Right cardiac atrium (tissue), 5 donors: ENCODE measurements at regions of chr12 and their contacts with region 1.

Region 1: DNA sequence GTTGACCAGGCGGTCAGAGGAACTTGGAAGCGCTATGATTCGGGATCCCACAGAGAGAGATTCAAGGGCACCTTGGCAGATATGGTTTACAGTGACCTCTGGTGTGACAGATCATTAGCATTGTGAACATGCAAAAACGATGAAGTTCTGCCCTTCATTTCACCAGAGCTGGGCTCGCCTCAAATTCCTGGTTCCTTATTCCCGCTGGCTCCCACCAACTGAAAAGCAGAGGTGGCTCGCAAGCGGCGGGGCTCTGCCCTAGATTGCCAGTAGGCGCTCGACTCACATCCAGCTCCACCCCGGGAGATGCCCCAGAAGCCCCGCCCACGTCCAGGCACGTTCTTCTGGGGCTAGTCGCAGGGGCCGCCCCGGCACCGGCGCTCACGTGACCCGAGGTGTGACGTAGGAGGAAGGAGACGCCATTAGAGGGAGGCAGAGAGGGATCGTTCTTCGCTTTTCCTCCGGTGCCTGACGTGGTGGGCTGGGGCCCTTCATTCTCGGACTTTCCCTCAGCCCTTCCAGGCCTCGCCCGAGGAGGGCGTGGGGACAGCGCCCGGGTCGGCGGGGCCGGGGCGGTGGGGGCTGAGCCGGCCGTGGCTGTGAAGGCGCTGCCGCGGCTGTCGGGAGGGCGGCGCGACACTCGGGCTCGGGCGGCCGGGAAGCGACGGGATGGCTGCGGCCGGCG is at the start of gene RAB21:
- DNase-seq: peak; percentile 99 to 100 (median 99)
- ATAC-seq: peak; percentile 98 to 99
- H3K4me3 ChIP-seq: peak within 1 kb of the TSS; percentile 92
- H3K27ac ChIP-seq: peak within 1 kb of the TSS; percentile 98
- H3K4me1 ChIP-seq: no peaks in the 10 kb centered on the region
- H3K27me3 ChIP-seq: no peaks in the 10 kb centered on the region
- total RNA-seq, gene RAB21: 124 to 152 (median 133) TPM

Region 2: GRCh38 chr12:71303199-71303598 is 451.4 kb before region 1 on chr12:
- intact Hi-C with region 1: no loop called
- DNase-seq: no peak
- ATAC-seq: no peak
- H3K4me3 ChIP-seq: no peak overlapping the region
- H3K27ac ChIP-seq: no peak overlapping the region
- H3K4me1 ChIP-seq: no peaks in the 10 kb centered on the region
- H3K27me3 ChIP-seq: no peaks in the 10 kb centered on the region

Region 3: GRCh38 chr12:71415336-71416231 is 339.0 kb before region 1 on chr12:
- intact Hi-C with region 1: loop called (anchors 5 to 10 kb)
- DNase-seq: no peak
- ATAC-seq: peak; percentile 63 to 70
- H3K4me3 ChIP-seq: no peak overlapping the region
- H3K27ac ChIP-seq: no peak overlapping the region
- H3K4me1 ChIP-seq: no peaks in the 10 kb centered on the region
- H3K27me3 ChIP-seq: no peaks in the 10 kb centered on the region

Region 4: GRCh38 chr12:71663561-71664294 is 90.9 kb before region 1 on chr12 and contains the start of gene ZFC3H1:
- intact Hi-C with region 1: loop called in 2 of 4 experiments (anchors 10 kb)
- DNase-seq: peak; percentile 92 to 96 (median 95)
- ATAC-seq: peak; percentile 97
- H3K4me3 ChIP-seq: peak within 1 kb of the TSS; percentile 89
- H3K27ac ChIP-seq: peak within 1 kb of the TSS; percentile 97
- H3K4me1 ChIP-seq: peaks cover 3% of the 10 kb centered on the region
- H3K27me3 ChIP-seq: no peaks in the 10 kb centered on the region
- total RNA-seq, gene ZFC3H1: 19.5 to 29.5 (median 23.3) TPM

Region 5: DNA sequence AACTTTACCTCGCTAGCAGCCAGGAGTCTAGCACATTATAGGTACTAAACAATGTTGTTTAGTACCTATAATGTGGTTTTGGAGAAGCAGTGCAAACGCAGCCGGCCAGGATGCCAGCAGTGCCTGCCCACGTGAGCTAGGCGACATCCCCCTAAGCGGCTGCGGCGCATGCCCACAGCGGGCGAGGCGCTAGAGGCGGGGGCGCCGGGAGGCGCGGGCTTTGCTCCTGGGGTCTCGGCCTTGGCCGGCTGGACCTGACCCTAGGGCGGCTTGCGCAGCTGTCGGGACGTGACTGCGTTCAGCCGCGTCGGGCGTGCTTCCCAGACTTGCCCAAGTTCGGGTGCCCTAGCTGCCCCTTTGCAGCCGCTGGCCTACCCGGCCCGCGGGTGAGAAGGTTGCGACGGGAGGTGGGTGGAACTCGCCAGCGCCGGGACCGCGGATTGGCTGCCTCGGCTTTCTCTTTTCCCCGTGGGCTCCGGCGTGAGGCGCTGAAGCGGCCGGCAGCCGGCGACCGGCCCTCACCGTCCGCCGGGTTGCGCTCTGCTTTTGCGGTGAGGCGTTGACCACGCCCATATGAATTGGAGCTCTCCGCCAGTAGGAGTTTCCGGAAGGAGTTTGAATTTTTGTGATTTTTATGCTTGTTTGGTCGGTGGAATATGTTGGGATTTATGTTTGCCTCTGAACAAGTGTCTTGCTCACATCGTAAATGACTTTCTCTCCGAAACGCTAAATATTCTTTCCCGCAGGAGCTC is 68.5 kb before region 1 on chr12 and contains the start of gene TMEM19:
- intact Hi-C with region 1: loop called in 1 of 4 experiments (anchors 10 kb)
- DNase-seq: peak; percentile 92 to 97 (median 96)
- ATAC-seq: peak; percentile 100
- H3K4me3 ChIP-seq: peak within 1 kb of the TSS; percentile 43
- H3K27ac ChIP-seq: peak within 1 kb of the TSS; percentile 79
- H3K4me1 ChIP-seq: no peaks in the 10 kb centered on the region
- H3K27me3 ChIP-seq: no peaks in the 10 kb centered on the region
- total RNA-seq, gene TMEM19: 28.5 to 31.3 (median 29.0) TPM

Region 6: DNA sequence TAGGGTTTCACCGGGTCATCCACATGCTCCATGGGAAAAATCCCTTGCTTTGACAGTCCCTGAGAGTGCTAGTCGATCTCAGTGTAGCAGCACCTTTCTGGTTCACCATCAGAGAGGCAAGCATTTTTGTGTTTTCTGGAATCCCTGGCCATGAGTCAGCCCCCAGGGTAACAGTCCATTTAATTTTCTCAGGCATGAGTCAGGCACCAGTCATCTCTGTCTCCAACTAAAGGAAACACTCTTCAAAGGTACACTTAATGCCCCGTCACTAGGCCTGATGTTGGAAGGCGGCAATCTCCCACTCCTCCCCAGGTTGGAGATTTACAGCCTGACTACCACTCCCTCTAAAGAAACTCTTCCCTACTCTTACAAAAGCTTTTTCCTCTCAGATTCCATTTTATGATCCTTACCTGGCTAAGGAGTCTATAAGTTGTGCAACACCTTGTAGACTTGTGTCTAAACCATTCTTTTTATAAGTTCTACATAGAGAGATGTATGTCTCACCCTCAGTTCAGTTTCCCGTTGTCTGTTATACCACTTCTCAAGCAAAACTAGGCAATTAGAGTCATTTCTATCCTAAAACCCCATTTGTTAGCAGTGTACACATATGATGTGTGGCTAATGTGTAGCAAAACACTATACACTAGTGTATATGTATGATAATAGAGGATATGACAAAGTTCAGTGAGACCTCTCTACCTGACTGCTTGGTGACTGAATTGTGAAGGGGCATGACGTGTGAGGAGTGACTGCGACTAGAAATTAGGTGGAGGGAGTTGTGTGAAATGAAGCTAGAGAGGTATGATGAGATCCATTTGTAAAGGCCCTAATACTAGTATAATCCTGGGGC is 44.1 kb before region 1 on chr12:
- intact Hi-C with region 1: no loop called
- DNase-seq: no peak
- ATAC-seq: no peak
- H3K4me3 ChIP-seq: no peak overlapping the region
- H3K27ac ChIP-seq: no peak overlapping the region
- H3K4me1 ChIP-seq: no peaks in the 10 kb centered on the region
- H3K27me3 ChIP-seq: no peaks in the 10 kb centered on the region

Region 7: DNA sequence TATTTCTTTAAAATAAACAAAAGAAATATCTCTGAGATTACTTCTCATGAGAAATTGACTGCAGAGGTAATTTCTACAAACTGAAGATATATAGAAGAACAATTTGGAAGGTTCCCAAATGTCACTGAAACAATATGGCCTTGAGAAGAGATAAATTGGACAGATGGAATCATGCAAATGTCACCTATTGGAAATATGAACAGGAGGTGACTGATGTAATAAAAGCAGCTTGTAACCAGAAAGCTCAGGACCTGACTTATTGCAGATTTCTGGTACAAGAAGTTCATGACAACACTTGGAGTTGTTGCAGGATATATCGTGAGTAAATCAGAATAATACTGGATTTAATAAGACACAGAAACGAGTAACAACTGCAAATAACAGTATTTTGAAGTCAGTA is 424.3 kb after region 1 on chr12:
- intact Hi-C with region 1: no loop called
- DNase-seq: no peak
- ATAC-seq: no peak
- H3K4me3 ChIP-seq: no peak overlapping the region
- H3K27ac ChIP-seq: no peak overlapping the region
- H3K4me1 ChIP-seq: no peaks in the 10 kb centered on the region
- H3K27me3 ChIP-seq: no peaks in the 10 kb centered on the region